H1 (cell line): ENCODE measurements at regions of chr19 and their contacts with region 1.

Region 1: DNA sequence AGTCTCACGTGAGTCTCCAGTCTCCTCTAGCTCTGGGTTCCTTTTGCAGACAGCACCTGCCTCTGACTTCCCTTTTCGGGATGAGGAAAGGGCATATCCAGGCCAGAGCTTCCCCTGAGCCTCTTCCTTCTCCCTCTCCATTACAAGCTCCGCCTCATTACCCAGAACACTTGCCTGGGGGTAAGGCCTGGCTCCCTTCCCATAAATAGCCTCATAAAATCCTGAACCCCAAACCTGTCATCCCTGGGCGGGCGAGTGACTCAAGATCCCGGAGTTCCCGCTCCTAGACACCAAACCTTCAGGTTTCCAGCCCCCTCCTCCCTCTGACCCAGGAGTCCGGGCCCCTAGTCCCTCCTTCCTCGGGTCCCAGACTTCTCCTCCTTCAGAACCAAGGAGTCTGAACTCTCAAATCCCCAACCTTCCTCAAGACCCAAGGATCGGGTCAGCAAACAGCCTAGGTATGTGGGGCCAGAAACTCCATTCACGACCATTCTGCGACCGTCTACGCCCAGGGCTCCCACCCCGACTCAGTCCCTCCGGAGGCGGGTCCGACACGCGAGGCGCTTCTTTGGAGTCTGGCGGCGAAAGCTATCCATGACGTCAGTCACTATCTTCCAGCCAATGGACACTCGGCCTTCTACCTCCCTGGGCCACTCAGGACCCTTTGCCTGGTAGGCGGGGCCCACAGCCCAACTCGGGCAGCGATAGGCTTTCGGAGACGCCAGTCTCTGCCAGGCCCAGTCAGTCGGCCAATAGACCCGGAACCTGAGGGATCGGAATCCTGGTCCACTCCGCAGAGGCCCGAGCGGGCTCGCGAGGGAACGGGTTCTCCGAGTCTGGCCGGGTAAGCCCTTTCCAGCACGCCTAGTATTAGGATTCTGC is 6.5 kb upstream of the CNFN start:
- DNase-seq: peak; percentile 97 to 100
- H3K4me3 ChIP-seq: peak overlapping the region; percentile 81 to 89 (median 86)
- H3K27ac ChIP-seq: peak overlapping the region; percentile 54; the same call in 1 of the 2 replicates
- H3K4me1 ChIP-seq: peaks cover 6 to 10% (median 8%) of the 10 kb centered on the region in 4 experiments; a peak in 6 of 7 replicates
- H3K27me3 ChIP-seq: no peaks in the 10 kb centered on the region; a peak in 1 of 7 replicates
- CTCF ChIP-seq: no peak
- EP300 ChIP-seq: no peak
- POLR2A ChIP-seq: peak; percentile 72 to 82
- RAD21 ChIP-seq: no peak; a peak in 1 of 4 replicates

Region 2: GRCh38 chr19:42370626-42371170 is 25.9 kb before region 1 on chr19:
- CTCF ChIA-PET with region 1: interaction called, 3 read pairs
- POLR2A ChIA-PET with region 1: interaction called, 13 read pairs
- DNase-seq: no peak
- H3K4me3 ChIP-seq: peak overlapping the region in 1 of 4 experiments; percentile 28; a peak in 1 of 8 replicates
- H3K27ac ChIP-seq: no peak overlapping the region; the same call in 1 of the 2 replicates
- H3K4me1 ChIP-seq: peaks cover 7 to 29% (median 22%) of the 10 kb centered on the region in 4 experiments
- H3K27me3 ChIP-seq: no peaks in the 10 kb centered on the region
- CTCF ChIP-seq: no peak
- EP300 ChIP-seq: no peak
- POLR2A ChIP-seq: no peak
- RAD21 ChIP-seq: no peak

Region 3: GRCh38 chr19:42468273-42468796 is 71.7 kb after region 1 on chr19:
- CTCF ChIA-PET with region 1: no interaction called
- POLR2A ChIA-PET with region 1: no interaction called
- DNase-seq: no peak
- H3K4me3 ChIP-seq: no peak overlapping the region
- H3K27ac ChIP-seq: no peak overlapping the region
- H3K4me1 ChIP-seq: peaks cover 11 to 20% (median 15%) of the 10 kb centered on the region in 4 experiments
- H3K27me3 ChIP-seq: no peaks in the 10 kb centered on the region
- CTCF ChIP-seq: no peak
- EP300 ChIP-seq: no peak
- POLR2A ChIP-seq: no peak
- RAD21 ChIP-seq: no peak

Region 4: DNA sequence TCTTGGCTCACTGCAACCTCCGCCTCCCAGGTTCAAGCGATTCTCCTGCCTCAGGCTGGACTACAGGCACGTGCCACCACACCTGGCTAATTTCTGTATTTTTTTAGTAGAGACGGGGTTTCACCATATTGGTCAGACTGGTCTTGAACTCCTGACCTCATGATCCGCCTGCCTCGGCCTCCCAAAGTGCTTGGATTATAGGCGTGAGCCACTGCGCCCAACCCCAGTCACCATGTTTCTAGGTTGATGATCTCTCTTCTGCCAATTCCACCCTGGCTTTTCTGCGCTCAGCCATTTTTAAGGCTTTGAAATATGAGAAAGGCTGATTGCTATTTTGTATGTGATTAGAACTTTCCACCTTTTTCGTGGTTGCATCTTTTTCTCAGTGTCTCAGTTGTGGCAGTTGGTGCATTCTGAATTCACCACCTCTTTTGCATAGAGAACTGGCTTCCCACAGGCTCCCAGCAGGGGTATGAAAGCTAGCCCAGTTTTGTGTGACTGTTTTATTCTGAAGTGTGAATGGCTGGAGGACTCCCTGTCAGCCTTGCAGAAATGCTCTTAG is 116.2 kb after region 1 on chr19:
- CTCF ChIA-PET with region 1: no interaction called
- POLR2A ChIA-PET with region 1: no interaction called
- DNase-seq: peak in 1 of 2 experiments; percentile 48
- H3K4me3 ChIP-seq: no peak overlapping the region
- H3K27ac ChIP-seq: no peak overlapping the region
- H3K4me1 ChIP-seq: peaks cover 0 to 5% (median 2%) of the 10 kb centered on the region in 4 experiments; a peak in 2 of 7 replicates
- H3K27me3 ChIP-seq: no peaks in the 10 kb centered on the region; a peak in 1 of 7 replicates
- CTCF ChIP-seq: no peak
- EP300 ChIP-seq: no peak
- POLR2A ChIP-seq: no peak
- RAD21 ChIP-seq: no peak

Region 5: GRCh38 chr19:42568006-42568405 is 171.4 kb after region 1 on chr19:
- CTCF ChIA-PET with region 1: no interaction called
- POLR2A ChIA-PET with region 1: no interaction called
- DNase-seq: no peak
- H3K4me3 ChIP-seq: no peak overlapping the region
- H3K27ac ChIP-seq: no peak overlapping the region
- H3K4me1 ChIP-seq: no peaks in the 10 kb centered on the region
- H3K27me3 ChIP-seq: no peaks in the 10 kb centered on the region
- CTCF ChIP-seq: no peak
- EP300 ChIP-seq: no peak
- POLR2A ChIP-seq: no peak
- RAD21 ChIP-seq: no peak

Region 6: DNA sequence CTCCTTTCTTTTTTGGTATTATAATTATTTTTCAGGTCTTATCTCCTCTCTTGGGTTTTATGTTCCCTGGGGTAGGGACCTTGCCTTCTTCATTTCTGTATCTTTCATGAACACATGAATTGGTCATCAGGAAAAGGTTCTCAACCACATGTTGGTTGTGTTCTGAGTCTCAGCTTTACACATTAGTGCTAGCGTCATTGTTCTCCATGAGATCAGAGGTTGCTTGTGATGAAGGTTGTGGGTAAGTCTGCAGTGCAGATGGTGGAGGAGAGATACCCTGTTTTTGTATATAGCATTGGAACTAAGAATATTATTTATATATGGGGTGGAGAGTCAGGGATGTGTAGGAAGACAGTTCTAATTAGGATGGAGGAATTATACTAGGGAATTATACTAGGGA is 222.6 kb after region 1 on chr19:
- CTCF ChIA-PET with region 1: no interaction called
- POLR2A ChIA-PET with region 1: no interaction called
- DNase-seq: no peak
- H3K4me3 ChIP-seq: no peak overlapping the region
- H3K27ac ChIP-seq: no peak overlapping the region
- H3K4me1 ChIP-seq: no peaks in the 10 kb centered on the region
- H3K27me3 ChIP-seq: no peaks in the 10 kb centered on the region
- CTCF ChIP-seq: no peak
- EP300 ChIP-seq: no peak
- POLR2A ChIP-seq: no peak
- RAD21 ChIP-seq: no peak